SK-N-SH (cell line): ENCODE measurements at regions of chr2 and their contacts with region 1.

Region 1: DNA sequence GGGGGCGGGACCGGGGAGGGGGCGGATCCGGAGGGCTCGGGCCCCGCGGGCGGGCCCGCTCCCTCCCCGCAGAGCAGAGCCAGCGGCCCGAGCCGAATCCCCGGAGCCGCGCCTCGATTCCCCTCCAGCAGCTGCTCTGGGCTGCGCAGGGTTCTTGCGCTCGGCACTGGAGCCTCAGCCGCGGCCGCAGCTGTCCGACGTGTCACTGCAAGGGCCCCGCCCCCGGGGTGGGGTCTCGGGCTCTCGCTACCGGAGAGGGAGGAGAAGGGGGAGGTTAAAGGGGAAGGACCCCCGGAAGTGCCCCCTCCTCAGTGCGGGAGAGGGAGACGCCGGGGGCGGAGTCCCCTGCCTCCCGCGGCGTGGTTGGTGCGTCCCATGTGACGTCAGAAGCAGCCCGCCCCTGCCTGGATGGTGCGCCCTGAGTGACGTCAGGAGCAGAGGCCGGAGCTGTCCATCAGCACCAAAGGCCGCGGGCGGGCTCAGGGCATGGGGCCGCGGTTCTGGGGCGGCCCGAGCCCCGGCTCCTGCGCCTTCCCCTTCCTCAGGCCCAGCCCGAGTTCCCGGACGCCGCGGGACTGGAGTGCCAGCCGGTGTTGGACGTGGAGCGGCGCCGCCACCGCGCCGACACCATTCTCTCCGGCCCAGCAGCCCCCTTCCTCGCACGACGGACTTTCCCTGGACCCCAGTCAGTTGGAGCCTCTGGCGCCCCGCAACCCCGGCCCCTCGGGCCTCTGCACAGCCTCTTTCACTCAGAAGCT is at the starts of genes CHPF and TMEM198:
- DNase-seq: peak; percentile 100
- H3K4me3 ChIP-seq: peak within 1 kb of the TSS; percentile 62 to 86
- H3K27ac ChIP-seq: peak within 1 kb of the TSS; percentile 73 to 77
- H3K4me1 ChIP-seq: peaks cover 7 to 30% of the 10 kb centered on the region in 2 experiments; a peak in 2 of 4 replicates
- H3K27me3 ChIP-seq: no peaks in the 10 kb centered on the region
- CTCF ChIP-seq: no peak
- EP300 ChIP-seq: no peak
- RAD21 ChIP-seq: no peak
- polyA plus RNA-seq, gene CHPF: 119 and 141 TPM in 2 replicates
- polyA plus RNA-seq, gene TMEM198: 4.7 and 7.0 TPM in 2 replicates

Region 2: GRCh38 chr2:219060821-219061791 is 482.7 kb before region 1 on chr2 and contains the start of gene IHH:
- CTCF ChIA-PET with region 1: no interaction called
- POLR2A ChIA-PET with region 1: no interaction called
- DNase-seq: peak; percentile 81
- H3K4me3 ChIP-seq: peak within 1 kb of the TSS in 1 of 2 experiments; percentile 35; a peak in 1 of 4 replicates
- H3K27ac ChIP-seq: no peak within 1 kb of the TSS
- H3K4me1 ChIP-seq: peaks cover 0 to 16% of the 10 kb centered on the region in 2 experiments; a peak in 1 of 4 replicates
- H3K27me3 ChIP-seq: peaks cover 40% of the 10 kb centered on the region
- CTCF ChIP-seq: no peak
- EP300 ChIP-seq: no peak
- RAD21 ChIP-seq: no peak
- polyA plus RNA-seq, gene IHH: 0.03 TPM in 1 of 2 replicates, not detected in the other

Region 3: GRCh38 chr2:219459460-219460311 is 84.1 kb before region 1 on chr2:
- CTCF ChIA-PET with region 1: interaction called, 21 read pairs
- POLR2A ChIA-PET with region 1: no interaction called
- DNase-seq: peak; percentile 88
- H3K4me3 ChIP-seq: no peak overlapping the region
- H3K27ac ChIP-seq: peak overlapping the region; percentile 29 to 92; a peak in 3 of 4 replicates
- H3K4me1 ChIP-seq: peaks cover 17 to 27% of the 10 kb centered on the region in 2 experiments
- H3K27me3 ChIP-seq: no peaks in the 10 kb centered on the region
- CTCF ChIP-seq: peak; percentile 87
- EP300 ChIP-seq: no peak
- RAD21 ChIP-seq: peak; percentile 77

Region 4: DNA sequence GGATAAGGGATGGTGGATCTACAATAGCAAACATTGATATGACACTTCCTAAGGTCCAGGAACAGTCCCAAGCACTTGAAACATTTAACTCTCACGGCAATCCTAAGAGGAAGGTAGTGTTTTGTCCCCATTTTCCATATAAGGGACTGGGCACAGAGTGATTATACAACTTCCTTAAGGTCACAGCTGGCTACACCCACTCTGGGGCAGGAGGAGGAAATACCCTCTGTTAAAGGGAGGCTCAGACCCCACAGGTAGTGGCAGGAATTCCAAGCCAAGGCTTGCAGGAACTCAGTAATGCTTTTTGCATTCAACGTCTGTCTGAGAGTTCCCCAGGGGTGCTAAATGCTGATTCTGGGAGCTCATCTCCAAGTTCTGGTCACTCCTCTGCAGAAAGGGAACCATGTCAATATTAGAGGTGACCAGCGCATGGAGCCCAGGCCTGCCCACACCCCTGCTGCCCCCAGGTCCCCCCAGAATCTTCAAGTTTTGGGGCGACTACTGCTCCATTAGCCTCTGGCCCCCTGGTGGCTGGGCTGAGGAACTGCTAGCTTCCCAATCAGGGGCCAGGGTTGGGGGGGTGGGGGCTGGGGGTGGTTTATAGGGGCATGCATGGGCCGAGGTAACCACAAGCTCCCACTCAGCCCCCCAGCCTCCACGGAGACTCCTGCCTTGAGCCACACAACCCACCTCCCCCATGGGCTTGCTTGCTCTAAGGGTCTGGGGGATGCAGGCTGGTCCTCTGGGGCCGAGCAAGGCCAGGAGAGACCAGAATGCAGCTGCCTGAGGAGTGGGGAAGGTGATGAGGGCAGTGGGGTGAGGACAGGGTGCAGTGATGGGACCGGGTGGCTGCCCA is 16.5 kb after region 1 on chr2:
- CTCF ChIA-PET with region 1: interaction called, 107 read pairs
- POLR2A ChIA-PET with region 1: interaction called, 3 read pairs
- DNase-seq: peak; percentile 90
- H3K4me3 ChIP-seq: no peak overlapping the region
- H3K27ac ChIP-seq: no peak overlapping the region
- H3K4me1 ChIP-seq: peaks cover 0 to 10% of the 10 kb centered on the region in 2 experiments; a peak in 1 of 4 replicates
- H3K27me3 ChIP-seq: no peaks in the 10 kb centered on the region
- CTCF ChIP-seq: peak; percentile 70
- EP300 ChIP-seq: no peak
- RAD21 ChIP-seq: no peak

Region 5: GRCh38 chr2:219597552-219598307 is 54.0 kb after region 1 on chr2 and contains the start of gene STK11IP:
- CTCF ChIA-PET with region 1: interaction called, 37 read pairs
- POLR2A ChIA-PET with region 1: interaction called, 14 read pairs
- DNase-seq: peak; percentile 98
- H3K4me3 ChIP-seq: peak within 1 kb of the TSS; percentile 71 to 73
- H3K27ac ChIP-seq: peak within 1 kb of the TSS; percentile 80 to 95
- H3K4me1 ChIP-seq: peaks cover 0 to 4% of the 10 kb centered on the region in 2 experiments; a peak in 2 of 4 replicates
- H3K27me3 ChIP-seq: no peaks in the 10 kb centered on the region
- CTCF ChIP-seq: no peak
- EP300 ChIP-seq: no peak
- RAD21 ChIP-seq: no peak
- polyA plus RNA-seq, gene STK11IP: 22.1 and 22.9 TPM in 2 replicates

Region 6: DNA sequence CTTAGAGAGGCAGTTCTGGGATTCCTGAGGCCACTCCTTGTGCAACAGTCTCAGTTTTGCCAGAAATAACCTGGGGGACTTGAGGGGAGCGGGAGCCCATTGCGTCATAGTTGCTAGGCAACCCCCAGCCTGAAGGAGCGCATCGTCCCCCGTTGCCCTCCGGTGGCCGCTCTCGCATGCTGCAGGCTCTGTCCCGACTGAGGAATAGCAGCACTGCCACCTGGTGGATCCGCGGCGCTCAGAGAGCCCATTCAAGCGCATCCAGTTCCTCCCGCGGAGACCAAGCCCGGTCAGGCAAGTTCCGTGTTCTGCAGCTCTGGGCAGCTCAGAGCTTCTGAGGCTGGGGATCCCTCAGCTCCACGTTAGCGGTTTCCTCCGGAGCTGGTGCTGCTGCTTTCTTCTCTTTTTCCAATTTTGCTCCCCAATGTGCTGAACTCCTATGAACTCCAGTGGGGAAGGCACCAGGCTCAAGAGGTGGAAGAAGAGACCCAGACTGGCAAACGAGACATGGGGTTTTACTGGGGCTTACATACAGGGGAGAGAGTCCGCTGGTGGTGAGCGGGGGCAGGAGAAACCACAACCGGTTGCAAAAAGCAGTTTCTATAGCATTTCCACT is 98.8 kb after region 1 on chr2:
- CTCF ChIA-PET with region 1: interaction called, 95 read pairs
- POLR2A ChIA-PET with region 1: no interaction called
- DNase-seq: peak; percentile 95
- H3K4me3 ChIP-seq: peak overlapping the region in 1 of 2 experiments; percentile 39; a peak in 1 of 4 replicates
- H3K27ac ChIP-seq: no peak overlapping the region
- H3K4me1 ChIP-seq: peaks cover 13 to 20% of the 10 kb centered on the region in 2 experiments; a peak in 3 of 4 replicates
- H3K27me3 ChIP-seq: no peaks in the 10 kb centered on the region; the same call in 1 of the 2 replicates
- CTCF ChIP-seq: peak; percentile 98
- EP300 ChIP-seq: no peak
- RAD21 ChIP-seq: peak; percentile 93

Region 7: GRCh38 chr2:219675221-219675620 is 131.4 kb after region 1 on chr2:
- CTCF ChIA-PET with region 1: interaction called, 12 read pairs
- POLR2A ChIA-PET with region 1: no interaction called
- DNase-seq: no peak
- H3K4me3 ChIP-seq: no peak overlapping the region
- H3K27ac ChIP-seq: no peak overlapping the region
- H3K4me1 ChIP-seq: no peaks in the 10 kb centered on the region
- H3K27me3 ChIP-seq: peaks cover 46% of the 10 kb centered on the region
- CTCF ChIP-seq: no peak
- EP300 ChIP-seq: no peak
- RAD21 ChIP-seq: no peak